Activated T-helper 2 cell treated with anti-CD3 and anti-CD28 coated beads, Interferon-gamma antibody, Interleukin-2, Interleukin-4, amounts not matched to agents 10 μg/mL and 5 μg/mL and 100 μg/mL, durations not matched to agents 14 hours and 24 hours and 36 hours (primary cell): ENCODE measurements at regions of chr17 and their contacts with region 1.

Region 1: GRCh38 chr17:68205251-68205807 is 42.5 kb upstream of the AMZ2 start:
- DNase-seq: peak; percentile 90
- H3K4me3 Mint-ChIP-seq: peak overlapping the region; percentile 93
- H3K27ac Mint-ChIP-seq: peak overlapping the region; percentile 33
- H3K4me1 Mint-ChIP-seq: peaks cover 26% of the 10 kb centered on the region
- H3K27me3 Mint-ChIP-seq: peaks cover 9% of the 10 kb centered on the region

Region 2: GRCh38 chr17:68172461-68172954 is 32.8 kb before region 1 on chr17:
- intact Hi-C with region 1: loop called (anchors 1 kb)
- DNase-seq: peak; percentile 58
- H3K4me3 Mint-ChIP-seq: no peak overlapping the region
- H3K27ac Mint-ChIP-seq: no peak overlapping the region
- H3K4me1 Mint-ChIP-seq: peaks cover 29% of the 10 kb centered on the region
- H3K27me3 Mint-ChIP-seq: no peaks in the 10 kb centered on the region

Region 3: GRCh38 chr17:68179926-68180285 is 25.4 kb before region 1 on chr17:
- intact Hi-C with region 1: loop called (anchors 1 kb)
- DNase-seq: no peak
- H3K4me3 Mint-ChIP-seq: no peak overlapping the region
- H3K27ac Mint-ChIP-seq: no peak overlapping the region
- H3K4me1 Mint-ChIP-seq: peaks cover 51% of the 10 kb centered on the region
- H3K27me3 Mint-ChIP-seq: no peaks in the 10 kb centered on the region

Region 4: DNA sequence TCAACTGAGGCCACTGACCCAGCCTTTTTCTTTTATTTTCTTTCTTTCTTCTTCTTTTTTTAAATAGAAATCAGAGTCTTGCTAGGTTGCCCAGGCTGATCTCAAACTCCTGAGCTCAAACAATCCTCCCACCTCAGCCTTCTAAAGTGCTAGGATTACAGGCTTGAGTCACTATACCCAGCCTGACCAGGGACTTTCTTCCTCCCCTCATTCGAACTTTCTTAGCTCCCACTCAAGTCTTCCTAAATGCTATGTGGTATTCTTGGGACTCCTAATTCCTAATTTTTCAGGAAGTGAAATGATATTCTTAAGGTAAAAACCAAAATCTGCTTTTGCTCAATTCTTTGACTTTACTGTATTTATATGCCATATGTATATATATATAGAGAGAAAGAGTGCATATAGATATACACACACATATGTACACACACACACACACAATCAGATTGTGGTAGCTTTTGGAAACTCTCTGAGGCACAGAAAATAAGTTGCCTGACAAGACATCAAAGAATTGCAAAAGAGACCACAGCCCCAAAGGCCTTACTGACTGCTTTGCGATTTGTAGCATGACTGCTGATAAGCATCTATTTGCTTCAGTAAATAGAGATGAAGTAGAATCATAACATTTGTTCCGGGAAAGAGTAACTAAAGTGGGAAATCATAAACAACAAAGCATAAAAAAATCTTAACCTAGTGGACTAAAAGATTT is 33.0 kb after region 1 on chr17:
- intact Hi-C with region 1: loop called (anchors 1 kb)
- DNase-seq: no peak
- H3K4me3 Mint-ChIP-seq: peak overlapping the region; percentile 75
- H3K27ac Mint-ChIP-seq: peak overlapping the region; percentile 95
- H3K4me1 Mint-ChIP-seq: peaks cover 63% of the 10 kb centered on the region
- H3K27me3 Mint-ChIP-seq: no peaks in the 10 kb centered on the region

Region 5: DNA sequence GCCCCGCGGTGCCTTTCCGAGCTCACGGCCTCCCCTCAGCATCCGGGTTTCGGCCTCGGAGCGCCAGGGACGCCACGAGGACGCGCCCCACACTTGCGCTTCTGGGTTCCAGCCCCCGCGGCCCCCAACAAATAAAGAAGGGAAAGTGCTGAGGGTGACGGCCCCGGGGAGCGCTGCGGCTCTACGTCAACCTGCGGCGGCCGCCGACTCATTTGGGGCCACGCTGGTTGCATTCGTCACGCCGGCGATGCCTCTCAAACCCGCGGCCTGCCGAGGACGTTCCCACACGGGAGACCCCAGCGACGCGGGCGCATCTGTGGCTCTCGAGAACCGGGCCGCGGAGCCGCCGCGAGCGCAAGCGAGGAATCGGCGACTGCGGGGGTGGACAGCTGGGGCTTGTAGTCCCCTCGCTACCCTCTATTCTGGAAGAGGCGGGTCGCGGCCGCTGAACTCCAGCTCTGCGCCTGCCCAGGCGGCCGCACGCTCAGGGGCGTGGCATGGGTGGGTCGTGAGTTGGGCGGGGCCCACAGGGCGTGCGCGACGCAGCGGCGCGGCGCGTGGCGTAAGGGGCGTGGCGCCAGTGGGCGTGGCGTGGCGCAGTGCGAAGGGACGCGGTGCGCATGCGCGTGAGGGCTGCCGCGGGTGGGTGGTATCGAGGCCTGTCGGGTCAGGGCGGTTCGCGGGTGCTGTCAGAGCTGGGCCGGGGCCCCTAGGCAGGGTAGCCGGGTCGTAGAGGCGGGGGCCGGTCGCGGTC is 42.3 kb after region 1 on chr17 and contains the start of gene AMZ2:
- intact Hi-C with region 1: loop called (anchors 1 kb)
- DNase-seq: peak; percentile 97
- H3K4me3 Mint-ChIP-seq: peak within 1 kb of the TSS; percentile 91
- H3K27ac Mint-ChIP-seq: peak within 1 kb of the TSS; percentile 94
- H3K4me1 Mint-ChIP-seq: peaks cover 39% of the 10 kb centered on the region
- H3K27me3 Mint-ChIP-seq: no peaks in the 10 kb centered on the region
- total RNA-seq, gene AMZ2: 85.9 and 111 TPM in 2 replicates

Region 6: GRCh38 chr17:68356520-68356919 is 151.2 kb after region 1 on chr17:
- intact Hi-C with region 1: loop called (anchors 10 kb)
- DNase-seq: peak; percentile 75
- H3K4me3 Mint-ChIP-seq: peak overlapping the region; percentile 73
- H3K27ac Mint-ChIP-seq: peak overlapping the region; percentile 86
- H3K4me1 Mint-ChIP-seq: peaks cover 57% of the 10 kb centered on the region
- H3K27me3 Mint-ChIP-seq: no peaks in the 10 kb centered on the region